B cell (primary cell): ENCODE measurements at regions of chr4 and their contacts with region 1.

Region 1: DNA sequence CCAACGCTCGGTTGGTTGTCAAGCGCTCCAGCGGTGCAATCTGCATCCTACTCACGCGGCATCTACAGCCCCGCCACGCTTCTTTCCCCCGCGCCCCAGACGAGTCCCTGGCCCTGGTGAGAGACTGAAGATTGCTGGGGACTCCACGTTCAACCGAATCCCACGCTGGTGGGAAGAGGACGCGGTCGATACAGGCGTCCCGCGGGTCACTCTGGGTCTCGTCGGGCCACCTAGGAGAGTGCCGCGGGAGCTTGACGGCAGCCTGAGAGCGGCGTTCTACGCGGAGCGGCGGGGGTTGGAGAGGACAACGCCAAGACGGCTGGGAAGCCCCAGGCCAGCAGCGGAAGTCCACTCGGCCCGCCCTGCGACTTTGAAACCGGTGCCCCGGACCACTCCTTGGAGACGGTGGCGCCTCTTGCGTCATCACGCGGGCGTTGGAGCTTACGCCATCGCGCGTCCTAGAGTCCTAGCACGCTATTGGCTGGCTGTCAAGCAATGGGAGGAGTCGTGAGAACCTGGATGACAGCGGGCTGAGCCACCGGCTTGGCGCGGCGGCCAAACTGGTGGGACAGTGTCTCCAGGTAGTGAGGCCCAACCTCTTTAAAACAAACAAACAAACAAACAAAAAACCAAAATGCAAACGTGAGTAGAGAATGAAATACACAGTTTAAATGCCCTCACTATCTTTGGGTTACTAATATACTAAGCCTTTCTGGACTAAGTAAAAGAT is at the start of gene SCLT1:
- DNase-seq: peak; percentile 97
- ATAC-seq: peak; percentile 95
- H3K4me3 ChIP-seq: peak within 1 kb of the TSS; percentile 79 to 98 (median 95)
- H3K4me3 Mint-ChIP-seq: no peak within 1 kb of the TSS
- H3K27ac ChIP-seq: peak within 1 kb of the TSS; percentile 95 to 96
- H3K27ac Mint-ChIP-seq: no peak within 1 kb of the TSS
- H3K4me1 ChIP-seq: peaks cover 22 to 43% of the 10 kb centered on the region in 2 donors
- H3K4me1 Mint-ChIP-seq: peaks cover 46% of the 10 kb centered on the region
- H3K27me3 ChIP-seq: no peaks in the 10 kb centered on the region
- H3K27me3 Mint-ChIP-seq: no peaks in the 10 kb centered on the region
- CTCF ChIP-seq: no peak
- total RNA-seq, gene SCLT1: 27.0 and 27.2 TPM in 2 replicates

Region 2: DNA sequence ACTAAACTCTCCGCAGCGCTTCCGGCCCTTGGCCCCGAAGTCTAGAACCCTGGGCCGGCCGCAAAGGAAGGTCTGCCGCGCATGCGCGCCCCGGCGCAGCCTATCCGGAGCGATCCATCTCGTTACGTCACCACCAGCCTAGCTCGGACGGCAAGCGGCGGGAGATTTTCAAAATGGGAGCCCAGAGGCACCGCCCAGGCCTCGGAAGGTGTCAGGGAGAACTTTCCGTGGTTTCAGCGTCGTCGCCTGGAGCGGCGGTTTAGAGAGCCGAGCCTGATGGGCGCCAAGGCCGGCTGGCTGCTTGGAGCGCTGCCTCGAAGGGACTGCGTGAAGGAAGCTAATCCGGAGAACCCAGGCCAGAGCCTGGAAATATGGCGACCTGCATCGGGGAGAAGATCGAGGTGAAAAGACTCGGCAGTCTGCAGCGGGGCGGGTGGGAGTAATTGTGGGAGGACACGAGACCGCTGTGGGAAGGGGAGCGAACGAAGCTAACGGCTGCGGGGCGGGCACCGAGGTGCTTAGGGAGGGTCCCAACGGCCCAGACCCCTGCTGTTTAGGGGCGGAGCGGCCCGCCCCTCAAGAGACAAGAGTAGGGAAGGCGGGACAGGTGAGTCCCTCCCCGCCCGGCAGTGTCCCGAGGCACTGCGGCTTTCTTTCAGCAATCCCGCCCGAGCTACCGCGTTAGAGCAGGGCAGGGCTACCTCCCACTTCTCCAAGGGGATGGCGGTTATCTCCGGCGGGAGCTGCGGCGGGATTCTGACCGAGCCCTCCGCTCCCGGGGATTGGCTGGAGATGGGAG is 1212.4 kb before region 1 on chr4 and contains the start of gene PLK4:
- CTCF ChIA-PET with region 1: no interaction called
- POLR2A ChIA-PET with region 1: no interaction called
- intact Hi-C with region 1: loop called (anchors 5 kb)
- DNase-seq: peak; percentile 96
- ATAC-seq: peak; percentile 95
- H3K4me3 ChIP-seq: peak within 1 kb of the TSS; percentile 72 to 97 (median 84)
- H3K4me3 Mint-ChIP-seq: peak within 1 kb of the TSS; percentile 98
- H3K27ac ChIP-seq: peak within 1 kb of the TSS; percentile 83 to 88
- H3K27ac Mint-ChIP-seq: peak within 1 kb of the TSS; percentile 97
- H3K4me1 ChIP-seq: peaks cover 7 to 10% of the 10 kb centered on the region in 2 donors
- H3K4me1 Mint-ChIP-seq: peaks cover 17% of the 10 kb centered on the region
- H3K27me3 ChIP-seq: no peaks in the 10 kb centered on the region
- H3K27me3 Mint-ChIP-seq: no peaks in the 10 kb centered on the region
- CTCF ChIP-seq: no peak
- total RNA-seq, gene PLK4: 2.8 and 4.3 TPM in 2 replicates

Region 3: DNA sequence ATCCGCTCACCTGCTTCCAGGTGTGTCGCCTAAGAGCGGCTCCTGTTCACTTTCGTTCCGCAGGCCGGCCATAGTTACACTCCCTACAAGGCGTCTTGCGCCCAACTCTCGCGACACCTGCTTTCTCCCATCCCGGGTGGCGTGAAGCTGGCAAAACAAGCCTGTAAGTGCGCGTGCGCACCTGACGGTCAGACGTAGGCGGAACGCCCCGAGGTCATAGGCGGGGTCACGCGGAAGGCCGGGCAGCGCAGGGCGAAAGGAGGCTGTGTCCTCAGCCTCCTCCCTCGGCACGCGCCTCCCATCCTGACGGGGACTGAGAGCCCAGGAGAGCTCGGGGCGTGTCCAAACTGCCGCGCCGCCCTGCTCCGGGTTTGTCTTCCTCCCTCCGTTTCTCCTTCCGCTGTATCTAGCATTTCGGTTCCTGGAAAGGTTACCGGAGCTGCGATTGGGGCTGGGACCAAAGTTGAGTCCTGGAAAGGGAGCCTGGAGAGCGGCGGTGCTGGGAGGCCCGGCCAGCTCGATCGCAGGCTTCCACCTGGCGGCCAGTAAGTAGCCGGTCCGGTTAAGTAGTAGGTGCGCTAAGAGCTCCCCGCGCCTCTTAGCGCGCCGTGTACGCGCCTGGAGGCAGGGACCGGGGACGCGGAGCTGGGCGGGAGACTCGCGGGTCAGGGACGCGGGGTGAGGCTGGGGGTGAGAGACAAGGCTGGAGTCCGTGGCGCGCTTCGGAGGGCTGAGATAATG is 1128.1 kb before region 1 on chr4 and contains the starts of genes ABHD18 and MFSD8:
- CTCF ChIA-PET with region 1: no interaction called
- POLR2A ChIA-PET with region 1: no interaction called
- intact Hi-C with region 1: loop called (anchors 2 kb)
- DNase-seq: peak; percentile 100
- ATAC-seq: peak; percentile 97
- H3K4me3 ChIP-seq: peak within 1 kb of the TSS; percentile 76 to 100 (median 85)
- H3K4me3 Mint-ChIP-seq: peak within 1 kb of the TSS; percentile 98
- H3K27ac ChIP-seq: peak within 1 kb of the TSS; percentile 86 to 96
- H3K27ac Mint-ChIP-seq: peak within 1 kb of the TSS; percentile 97
- H3K4me1 ChIP-seq: peaks cover 5 to 18% of the 10 kb centered on the region in 2 donors
- H3K4me1 Mint-ChIP-seq: peaks cover 34% of the 10 kb centered on the region
- H3K27me3 ChIP-seq: no peaks in the 10 kb centered on the region
- H3K27me3 Mint-ChIP-seq: no peaks in the 10 kb centered on the region
- CTCF ChIP-seq: peak; percentile 33
- total RNA-seq, gene ABHD18: 17.5 and 18.3 TPM in 2 replicates
- total RNA-seq, gene MFSD8: 52.2 and 53.1 TPM in 2 replicates

Region 4: GRCh38 chr4:128287871-128288688 is 805.3 kb before region 1 on chr4:
- CTCF ChIA-PET with region 1: no interaction called
- POLR2A ChIA-PET with region 1: no interaction called
- intact Hi-C with region 1: loop called (anchors 1 kb)
- DNase-seq: peak; percentile 100
- ATAC-seq: peak; percentile 87
- H3K4me3 ChIP-seq: peak overlapping the region; percentile 51 to 90 (median 88)
- H3K4me3 Mint-ChIP-seq: peak overlapping the region; percentile 87
- H3K27ac ChIP-seq: peak overlapping the region; percentile 88 to 92
- H3K27ac Mint-ChIP-seq: peak overlapping the region; percentile 90
- H3K4me1 ChIP-seq: peaks cover 23 to 27% of the 10 kb centered on the region in 2 donors
- H3K4me1 Mint-ChIP-seq: peaks cover 29% of the 10 kb centered on the region
- H3K27me3 ChIP-seq: no peaks in the 10 kb centered on the region
- H3K27me3 Mint-ChIP-seq: no peaks in the 10 kb centered on the region
- CTCF ChIP-seq: no peak

Region 5: DNA sequence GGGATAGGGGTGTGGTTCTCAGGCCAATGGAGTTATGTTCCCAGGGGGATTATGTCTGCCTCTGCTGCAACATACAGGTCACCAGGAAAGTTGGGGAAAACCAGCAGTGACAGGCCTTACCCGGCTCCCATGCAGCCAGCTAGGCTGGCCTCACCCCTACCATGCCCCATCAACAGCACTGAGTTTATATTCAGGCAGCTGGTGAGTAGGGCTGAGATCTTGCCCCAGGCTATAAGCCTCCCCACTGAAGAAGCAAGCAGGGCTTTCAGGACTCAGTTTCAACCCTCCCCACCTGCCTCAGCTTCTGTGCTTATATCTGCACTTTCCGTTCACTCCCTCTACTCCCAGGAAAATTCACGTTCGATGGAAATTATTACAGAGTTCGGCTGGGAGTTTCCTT is 683.3 kb before region 1 on chr4:
- CTCF ChIA-PET with region 1: no interaction called
- POLR2A ChIA-PET with region 1: no interaction called
- intact Hi-C with region 1: no loop called
- DNase-seq: no peak
- ATAC-seq: no peak
- H3K4me3 ChIP-seq: no peak overlapping the region
- H3K4me3 Mint-ChIP-seq: no peak overlapping the region
- H3K27ac ChIP-seq: no peak overlapping the region
- H3K27ac Mint-ChIP-seq: no peak overlapping the region
- H3K4me1 ChIP-seq: no peaks in the 10 kb centered on the region
- H3K4me1 Mint-ChIP-seq: no peaks in the 10 kb centered on the region
- H3K27me3 ChIP-seq: no peaks in the 10 kb centered on the region
- H3K27me3 Mint-ChIP-seq: peaks cover 3% of the 10 kb centered on the region
- CTCF ChIP-seq: no peak

Region 6: DNA sequence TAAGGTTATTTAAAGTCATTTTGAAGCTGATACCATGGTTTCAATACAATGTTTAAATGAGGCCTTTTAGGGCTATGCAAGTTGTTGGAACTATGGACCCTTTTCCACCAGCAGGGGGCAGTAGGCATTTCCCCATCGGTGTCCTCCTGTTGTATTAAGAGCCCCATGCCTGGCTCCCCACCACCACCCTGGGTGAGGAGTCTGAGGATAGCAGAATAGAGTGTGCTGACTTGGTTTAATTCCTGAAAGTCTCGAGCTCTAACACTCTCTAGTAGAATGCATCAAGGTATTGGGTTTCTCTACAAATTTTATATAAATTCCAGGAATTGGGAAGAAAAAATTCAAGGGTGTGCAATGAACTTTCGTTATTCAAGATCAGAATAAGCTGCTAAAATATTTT is 518.6 kb before region 1 on chr4:
- CTCF ChIA-PET with region 1: no interaction called
- POLR2A ChIA-PET with region 1: no interaction called
- intact Hi-C with region 1: no loop called
- DNase-seq: peak; percentile 67
- ATAC-seq: no peak
- H3K4me3 ChIP-seq: no peak overlapping the region
- H3K4me3 Mint-ChIP-seq: no peak overlapping the region
- H3K27ac ChIP-seq: no peak overlapping the region
- H3K27ac Mint-ChIP-seq: no peak overlapping the region
- H3K4me1 ChIP-seq: no peaks in the 10 kb centered on the region
- H3K4me1 Mint-ChIP-seq: no peaks in the 10 kb centered on the region
- H3K27me3 ChIP-seq: no peaks in the 10 kb centered on the region
- H3K27me3 Mint-ChIP-seq: peaks cover 14% of the 10 kb centered on the region
- CTCF ChIP-seq: peak; percentile 70

Region 7: GRCh38 chr4:128916832-128917231 is 176.5 kb before region 1 on chr4:
- CTCF ChIA-PET with region 1: no interaction called
- POLR2A ChIA-PET with region 1: no interaction called
- intact Hi-C with region 1: loop called (anchors 5 kb)
- DNase-seq: peak; percentile 82
- ATAC-seq: peak; percentile 96
- H3K4me3 ChIP-seq: no peak overlapping the region
- H3K4me3 Mint-ChIP-seq: peak overlapping the region; percentile 72
- H3K27ac ChIP-seq: peak overlapping the region; percentile 8 to 54
- H3K27ac Mint-ChIP-seq: peak overlapping the region; percentile 80
- H3K4me1 ChIP-seq: peaks cover 20 to 22% of the 10 kb centered on the region in 2 donors
- H3K4me1 Mint-ChIP-seq: peaks cover 28% of the 10 kb centered on the region
- H3K27me3 ChIP-seq: no peaks in the 10 kb centered on the region
- H3K27me3 Mint-ChIP-seq: no peaks in the 10 kb centered on the region
- CTCF ChIP-seq: no peak

Region 8: DNA sequence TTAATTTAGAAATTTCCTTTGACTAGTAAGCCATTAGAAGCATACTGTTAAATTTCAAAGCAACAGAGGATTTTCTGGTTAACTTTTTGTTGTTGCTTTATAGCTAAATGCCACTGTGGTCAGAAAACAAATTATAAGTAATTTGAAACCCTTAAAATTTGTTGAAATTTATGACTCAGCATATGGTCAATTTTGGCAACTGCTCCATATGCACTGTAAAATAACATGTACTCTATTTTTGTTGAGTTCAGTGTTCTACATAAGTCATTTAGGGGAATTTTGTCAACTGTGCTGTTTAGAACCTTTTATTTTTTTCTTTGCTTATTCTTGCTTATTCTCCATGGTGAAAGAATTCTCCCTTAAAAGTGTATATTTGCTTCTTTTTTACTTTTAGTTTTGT is 28.6 kb before region 1 on chr4:
- CTCF ChIA-PET with region 1: no interaction called
- POLR2A ChIA-PET with region 1: no interaction called
- intact Hi-C with region 1: loop called (anchors 1 kb)
- DNase-seq: no peak
- ATAC-seq: no peak
- H3K4me3 ChIP-seq: no peak overlapping the region
- H3K4me3 Mint-ChIP-seq: no peak overlapping the region
- H3K27ac ChIP-seq: no peak overlapping the region
- H3K27ac Mint-ChIP-seq: no peak overlapping the region
- H3K4me1 ChIP-seq: no peaks in the 10 kb centered on the region
- H3K4me1 Mint-ChIP-seq: peaks cover 4% of the 10 kb centered on the region
- H3K27me3 ChIP-seq: no peaks in the 10 kb centered on the region
- H3K27me3 Mint-ChIP-seq: no peaks in the 10 kb centered on the region
- CTCF ChIP-seq: no peak

Region 9: DNA sequence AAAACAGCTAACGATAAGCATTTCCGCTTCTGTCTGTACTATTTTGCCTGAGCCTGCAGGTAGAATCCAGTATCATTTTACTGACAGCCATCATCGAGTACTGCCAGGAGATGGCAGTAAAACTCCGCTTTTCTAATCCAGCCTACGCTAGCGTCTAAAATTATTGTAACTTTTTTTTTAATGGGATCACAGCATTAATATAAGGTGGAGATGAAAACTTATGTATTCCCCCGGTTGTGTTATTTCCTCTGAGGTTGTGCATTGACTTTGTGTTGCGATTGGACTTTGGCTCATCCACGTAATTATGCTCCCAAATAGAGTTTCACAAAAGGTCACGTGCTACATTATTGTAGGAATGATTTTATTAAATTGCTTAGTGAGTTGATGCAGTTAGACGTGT is 250.7 kb after region 1 on chr4:
- CTCF ChIA-PET with region 1: no interaction called
- POLR2A ChIA-PET with region 1: no interaction called
- intact Hi-C with region 1: no loop called
- DNase-seq: no peak
- ATAC-seq: no peak
- H3K4me3 ChIP-seq: no peak overlapping the region
- H3K4me3 Mint-ChIP-seq: no peak overlapping the region
- H3K27ac ChIP-seq: no peak overlapping the region
- H3K27ac Mint-ChIP-seq: no peak overlapping the region
- H3K4me1 ChIP-seq: no peaks in the 10 kb centered on the region
- H3K4me1 Mint-ChIP-seq: no peaks in the 10 kb centered on the region
- H3K27me3 ChIP-seq: peaks cover 0 to 4% (median 0%) of the 10 kb centered on the region in 4 experiments
- H3K27me3 Mint-ChIP-seq: peaks cover 3% of the 10 kb centered on the region
- CTCF ChIP-seq: peak; percentile 40